ENCODE measurements at regions of chr7 and their contacts with region 1.

Region 1: DNA sequence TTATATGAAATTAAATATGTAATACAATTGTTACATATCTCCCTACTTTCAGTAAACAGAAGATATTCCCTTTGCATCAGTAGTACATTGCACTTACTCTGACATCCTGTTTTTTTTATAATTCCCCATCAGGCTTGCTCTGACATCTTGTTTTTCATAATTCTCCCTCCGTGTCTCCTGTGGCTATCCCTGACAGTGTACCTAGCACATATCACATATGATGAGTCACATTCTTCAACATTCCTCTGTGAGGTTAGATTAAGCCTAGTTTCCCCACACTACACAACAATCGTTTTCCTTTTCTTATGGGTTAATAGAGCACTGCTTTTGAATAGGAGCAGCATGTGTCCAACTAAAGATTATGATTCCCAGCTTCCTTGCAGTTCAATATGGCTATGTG is 250.6 kb upstream of the NPVF start:
- DNase-seq: no peak
- H3K4me3 Mint-ChIP-seq: no peak overlapping the region
- H3K27ac Mint-ChIP-seq: no peak overlapping the region
- H3K4me1 Mint-ChIP-seq: no peaks in the 10 kb centered on the region
- H3K27me3 Mint-ChIP-seq: peaks cover 73% of the 10 kb centered on the region
- CTCF ChIP-seq: no peak

Region 2: DNA sequence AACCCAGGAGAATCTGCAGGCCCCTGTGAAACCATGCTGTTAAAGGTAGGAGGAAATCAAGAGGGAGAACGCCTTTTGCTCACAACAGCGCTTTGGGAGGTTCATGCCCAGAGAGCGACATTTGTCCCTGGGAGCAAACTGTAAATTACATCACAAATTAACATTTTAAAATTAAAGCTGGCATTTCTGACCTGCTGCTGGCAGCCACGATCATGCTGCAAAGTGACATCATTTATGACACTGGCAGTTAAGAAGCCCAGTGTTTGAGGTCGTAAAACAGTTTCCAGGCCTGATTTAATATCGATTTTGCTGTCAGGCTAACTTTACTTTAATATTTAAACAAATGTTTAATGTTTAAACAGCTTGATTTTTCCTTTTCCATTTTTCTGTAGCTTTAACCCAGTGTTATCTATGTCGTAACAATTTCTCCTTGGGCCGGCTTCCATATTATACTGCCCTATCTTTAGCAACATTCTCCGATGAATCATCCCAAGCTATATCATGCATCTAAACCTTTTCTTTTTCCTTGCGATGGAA is 164.1 kb before region 1 on chr7:
- CTCF ChIA-PET with region 1: no interaction called
- intact Hi-C with region 1: no loop called
- DNase-seq: peak; percentile 30
- H3K4me3 Mint-ChIP-seq: peak overlapping the region; percentile 2
- H3K27ac Mint-ChIP-seq: peak overlapping the region; percentile 30
- H3K4me1 Mint-ChIP-seq: peaks cover 36% of the 10 kb centered on the region
- H3K27me3 Mint-ChIP-seq: no peaks in the 10 kb centered on the region
- CTCF ChIP-seq: no peak

Region 3: GRCh38 chr7:25537662-25538375 is 58.9 kb after region 1 on chr7:
- CTCF ChIA-PET with region 1: no interaction called
- intact Hi-C with region 1: loop called (anchors 10 kb)
- DNase-seq: no peak
- H3K4me3 Mint-ChIP-seq: no peak overlapping the region
- H3K27ac Mint-ChIP-seq: no peak overlapping the region
- H3K4me1 Mint-ChIP-seq: no peaks in the 10 kb centered on the region
- H3K27me3 Mint-ChIP-seq: peaks cover 73% of the 10 kb centered on the region
- CTCF ChIP-seq: no peak

Measured in Calu3 (cell line).